Transverse colon (tissue), 4 donors: ENCODE measurements at regions of chr9 and their contacts with region 1.

Region 1: DNA sequence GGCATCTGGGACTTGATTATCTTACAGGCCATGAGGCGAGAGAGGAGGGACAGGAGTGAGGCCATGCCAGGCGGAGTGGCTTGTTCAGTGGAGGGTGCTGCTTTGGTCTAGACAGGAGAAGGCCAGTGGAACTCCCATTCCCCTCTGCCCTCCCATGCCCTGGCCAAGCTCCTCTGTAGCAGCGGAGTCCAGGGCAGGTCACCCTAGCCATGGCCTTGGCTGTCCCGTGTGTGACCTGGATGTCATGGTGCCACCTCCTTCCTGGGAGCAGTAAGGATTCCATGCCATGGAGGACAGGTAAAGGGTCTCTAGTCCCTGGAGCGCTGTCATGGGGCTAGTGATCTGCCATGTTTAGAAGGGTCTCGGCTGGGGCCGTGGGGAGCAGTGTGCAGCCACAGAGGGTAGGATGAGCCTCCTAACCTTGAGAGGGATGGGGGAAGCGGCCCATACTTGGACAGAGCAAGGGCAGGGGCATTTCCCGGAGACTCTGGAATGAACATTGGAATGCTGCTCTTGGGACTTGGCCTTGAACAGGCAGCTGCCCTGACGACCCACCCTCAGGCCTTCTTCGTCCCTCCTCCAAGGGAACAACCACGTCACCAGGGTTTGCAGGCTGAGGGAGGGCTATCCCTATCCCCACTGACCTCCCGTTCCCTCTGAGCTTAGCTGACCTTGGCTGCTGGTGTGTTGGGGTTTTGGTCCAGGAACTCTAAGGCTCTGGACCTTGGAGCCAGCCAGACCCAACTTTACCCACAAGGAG is 100.4 kb downstream of the DAB2IP start:
- DNase-seq: no peak
- H3K4me3 ChIP-seq: no peak overlapping the region
- H3K27ac ChIP-seq: peak overlapping the region; percentile 11 to 50 (median 37)
- H3K4me1 ChIP-seq: peaks cover 23 to 54% (median 51%) of the 10 kb centered on the region in 4 donors
- H3K27me3 ChIP-seq: no peaks in the 10 kb centered on the region
- CTCF ChIP-seq: no peak
- EP300 ChIP-seq: no peak
- POLR2A ChIP-seq: no peak

Region 2: GRCh38 chr9:121631978-121632418 is 119.9 kb before region 1 on chr9:
- in situ Hi-C with region 1: no loop called
- intact Hi-C with region 1: no loop called
- DNase-seq: no peak
- H3K4me3 ChIP-seq: no peak overlapping the region
- H3K27ac ChIP-seq: no peak overlapping the region
- H3K4me1 ChIP-seq: peaks cover 19 to 53% (median 32%) of the 10 kb centered on the region in 4 donors
- H3K27me3 ChIP-seq: no peaks in the 10 kb centered on the region
- CTCF ChIP-seq: no peak
- EP300 ChIP-seq: no peak
- POLR2A ChIP-seq: no peak

Region 3: GRCh38 chr9:121767171-121767769 is 15.4 kb after region 1 on chr9:
- in situ Hi-C with region 1: no loop called
- intact Hi-C with region 1: loop called (anchors 1 kb)
- DNase-seq: no peak
- H3K4me3 ChIP-seq: no peak overlapping the region
- H3K27ac ChIP-seq: no peak overlapping the region
- H3K4me1 ChIP-seq: peaks cover 5 to 12% (median 9%) of the 10 kb centered on the region in 4 donors
- H3K27me3 ChIP-seq: no peaks in the 10 kb centered on the region
- CTCF ChIP-seq: no peak
- EP300 ChIP-seq: no peak
- POLR2A ChIP-seq: no peak